ENCODE measurements at regions of chr4 and their contacts with region 1.

Region 1: GRCh38 chr4:83034630-83035494 is at the start of gene COPS4:
- DNase-seq: peak; percentile 86 to 100 (median 92)
- ATAC-seq: peak; percentile 95
- H3K4me3 ChIP-seq: peak within 1 kb of the TSS; percentile 83
- H3K4me3 Mint-ChIP-seq: peak within 1 kb of the TSS; percentile 99
- H3K27ac ChIP-seq: peak within 1 kb of the TSS; percentile 84
- H3K27ac Mint-ChIP-seq: peak within 1 kb of the TSS; percentile 90
- H3K4me1 ChIP-seq: peaks cover 28% of the 10 kb centered on the region
- H3K4me1 Mint-ChIP-seq: peaks cover 41% of the 10 kb centered on the region
- H3K27me3 ChIP-seq: no peaks in the 10 kb centered on the region
- H3K27me3 Mint-ChIP-seq: no peaks in the 10 kb centered on the region
- CTCF ChIP-seq: no peak
- total RNA-seq, gene COPS4: 26.0 to 27.6 TPM

Region 2: GRCh38 chr4:82890901-82891706 is 143.8 kb before region 1 on chr4 and contains the start of gene SEC31A:
- CTCF ChIA-PET with region 1: no interaction called
- POLR2A ChIA-PET with region 1: interaction called, 9 read pairs
- intact Hi-C with region 1: loop called in 1 of 2 experiments (anchors 1 kb)
- DNase-seq: peak; percentile 93 to 99 (median 96)
- ATAC-seq: peak; percentile 91
- H3K4me3 ChIP-seq: peak within 1 kb of the TSS; percentile 93
- H3K4me3 Mint-ChIP-seq: peak within 1 kb of the TSS; percentile 91
- H3K27ac ChIP-seq: peak within 1 kb of the TSS; percentile 87 to 95
- H3K27ac Mint-ChIP-seq: peak within 1 kb of the TSS; percentile 99
- H3K4me1 ChIP-seq: peaks cover 11% of the 10 kb centered on the region
- H3K4me1 Mint-ChIP-seq: peaks cover 49% of the 10 kb centered on the region
- H3K27me3 ChIP-seq: no peaks in the 10 kb centered on the region
- H3K27me3 Mint-ChIP-seq: no peaks in the 10 kb centered on the region
- CTCF ChIP-seq: no peak
- total RNA-seq, gene SEC31A: 130 to 131 TPM

Region 3: GRCh38 chr4:83012687-83013419 is 22.0 kb before region 1 on chr4:
- CTCF ChIA-PET with region 1: interaction called, 10 read pairs
- POLR2A ChIA-PET with region 1: interaction called, 156 read pairs
- intact Hi-C with region 1: loop called (anchors 1 kb)
- DNase-seq: peak; percentile 94 to 99 (median 96)
- ATAC-seq: peak; percentile 85
- H3K4me3 ChIP-seq: peak overlapping the region; percentile 71
- H3K4me3 Mint-ChIP-seq: peak overlapping the region; percentile 97
- H3K27ac ChIP-seq: peak overlapping the region; percentile 33 to 49
- H3K27ac Mint-ChIP-seq: peak overlapping the region; percentile 91
- H3K4me1 ChIP-seq: peaks cover 26% of the 10 kb centered on the region
- H3K4me1 Mint-ChIP-seq: peaks cover 58% of the 10 kb centered on the region
- H3K27me3 ChIP-seq: no peaks in the 10 kb centered on the region
- H3K27me3 Mint-ChIP-seq: no peaks in the 10 kb centered on the region
- CTCF ChIP-seq: peak; percentile 56

Region 4: DNA sequence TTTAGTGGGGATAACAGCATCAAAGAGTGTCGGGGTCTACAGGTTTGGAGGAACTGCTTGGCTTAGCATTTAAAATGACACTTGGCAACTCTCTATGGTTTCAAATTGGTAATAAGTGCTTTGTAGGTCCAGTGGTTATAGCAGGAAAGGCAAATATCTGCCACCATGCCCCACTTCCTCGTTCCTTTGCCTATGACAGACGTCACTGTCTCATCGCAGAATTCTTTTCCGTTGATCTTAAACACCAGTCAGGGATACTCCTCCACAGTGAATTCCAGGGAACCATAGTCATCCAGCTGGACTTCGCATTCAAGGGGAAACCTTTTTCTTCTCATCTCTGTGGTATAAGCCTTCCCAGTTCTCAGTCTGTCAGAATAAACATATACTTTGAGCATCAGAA is 820.2 kb after region 1 on chr4:
- CTCF ChIA-PET with region 1: no interaction called
- POLR2A ChIA-PET with region 1: no interaction called
- intact Hi-C with region 1: no loop called
- DNase-seq: no peak
- ATAC-seq: no peak
- H3K4me3 ChIP-seq: no peak overlapping the region
- H3K4me3 Mint-ChIP-seq: no peak overlapping the region
- H3K27ac ChIP-seq: no peak overlapping the region
- H3K27ac Mint-ChIP-seq: no peak overlapping the region
- H3K4me1 ChIP-seq: no peaks in the 10 kb centered on the region
- H3K4me1 Mint-ChIP-seq: no peaks in the 10 kb centered on the region
- H3K27me3 ChIP-seq: no peaks in the 10 kb centered on the region
- H3K27me3 Mint-ChIP-seq: peaks cover 7% of the 10 kb centered on the region
- CTCF ChIP-seq: no peak

Region 5: GRCh38 chr4:84582302-84583000 is 1547.6 kb after region 1 on chr4:
- CTCF ChIA-PET with region 1: no interaction called
- POLR2A ChIA-PET with region 1: no interaction called
- intact Hi-C with region 1: loop called in 1 of 2 experiments (anchors 10 kb)
- DNase-seq: peak; percentile 76 to 97 (median 92)
- ATAC-seq: peak; percentile 80
- H3K4me3 ChIP-seq: peak overlapping the region; percentile 56
- H3K4me3 Mint-ChIP-seq: peak overlapping the region; percentile 68
- H3K27ac ChIP-seq: no peak overlapping the region
- H3K27ac Mint-ChIP-seq: peak overlapping the region; percentile 8
- H3K4me1 ChIP-seq: peaks cover 17% of the 10 kb centered on the region
- H3K4me1 Mint-ChIP-seq: peaks cover 15% of the 10 kb centered on the region
- H3K27me3 ChIP-seq: peaks cover 9 to 10% of the 10 kb centered on the region in 2 experiments
- H3K27me3 Mint-ChIP-seq: peaks cover 38% of the 10 kb centered on the region
- CTCF ChIP-seq: no peak